GM10248 (cell line): ENCODE measurements at regions of chr21 and their contacts with region 1.

Region 1: GRCh38 chr21:38249256-38249655 is 7.5 kb upstream of the KCNJ15 start:
- DNase-seq: no peak
- CTCF ChIP-seq: no peak

Region 2: DNA sequence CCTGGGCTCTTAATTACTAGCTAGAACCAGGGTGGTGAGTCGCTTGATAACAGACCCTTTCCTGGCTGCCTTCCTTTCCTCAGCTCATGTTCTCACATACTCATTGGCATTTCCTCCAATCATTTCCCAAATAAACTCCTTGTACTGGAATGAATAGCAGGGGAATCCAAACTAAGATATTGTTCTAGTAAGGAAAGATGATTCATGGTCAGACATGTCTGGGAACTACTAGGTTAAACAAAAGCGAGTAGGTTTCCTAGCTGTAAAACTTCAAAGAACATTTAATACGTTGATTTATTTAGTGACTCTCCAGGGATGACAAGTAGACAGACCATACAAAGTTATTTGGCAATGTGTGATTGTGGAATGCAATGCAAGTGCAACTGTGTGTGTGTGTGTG is 211.8 kb before region 1 on chr21:
- CTCF ChIA-PET with region 1: no interaction called
- POLR2A ChIA-PET with region 1: no interaction called
- DNase-seq: no peak
- CTCF ChIP-seq: no peak

Region 3: DNA sequence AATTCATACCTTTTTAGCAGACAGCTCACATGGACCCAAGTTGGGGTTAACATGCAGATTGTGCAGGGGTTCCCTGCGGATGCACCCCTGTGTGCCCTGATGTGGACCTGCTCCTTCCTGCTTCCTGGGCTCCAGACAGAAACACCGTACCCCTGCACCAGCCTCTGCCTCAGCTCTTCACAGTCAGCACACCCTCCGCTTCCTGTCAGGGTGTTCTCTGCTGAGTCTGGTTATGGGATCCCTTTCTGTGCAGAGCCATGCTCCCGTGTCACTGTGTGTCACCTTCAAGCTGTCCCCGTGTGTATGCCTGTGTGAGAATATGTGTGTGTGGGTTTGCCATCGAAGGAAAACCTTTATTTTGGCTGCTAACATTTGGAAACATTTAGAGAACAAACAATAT is 41.1 kb before region 1 on chr21:
- CTCF ChIA-PET with region 1: no interaction called
- POLR2A ChIA-PET with region 1: no interaction called
- DNase-seq: no peak
- CTCF ChIP-seq: no peak

Region 4: DNA sequence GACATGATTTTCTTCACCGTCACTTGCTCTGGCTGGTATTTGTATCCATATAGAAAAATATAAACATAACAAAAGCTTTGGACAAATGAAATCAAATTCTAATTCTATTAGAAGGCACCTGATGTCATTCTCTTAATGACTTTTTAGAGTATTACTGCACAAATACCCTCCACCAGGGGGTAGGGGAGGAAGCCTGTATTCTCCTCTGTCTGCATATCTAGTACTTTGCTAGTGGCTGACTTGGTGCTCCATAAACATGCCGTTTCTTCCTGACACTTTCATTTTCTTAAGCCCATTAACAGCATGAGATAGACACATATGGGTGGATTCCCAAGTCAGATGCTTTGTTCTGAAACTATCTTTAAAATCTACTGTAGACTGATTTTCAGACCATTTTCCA is 13.0 kb before region 1 on chr21:
- CTCF ChIA-PET with region 1: interaction called, 18 read pairs
- POLR2A ChIA-PET with region 1: no interaction called
- DNase-seq: no peak
- CTCF ChIP-seq: no peak